Activated naive CD4-positive, alpha-beta T cell treated with anti-CD3 and anti-CD28 coated beads for 36 hours (primary cell): ENCODE measurements at regions of chrX and their contacts with region 1.

Region 1: DNA sequence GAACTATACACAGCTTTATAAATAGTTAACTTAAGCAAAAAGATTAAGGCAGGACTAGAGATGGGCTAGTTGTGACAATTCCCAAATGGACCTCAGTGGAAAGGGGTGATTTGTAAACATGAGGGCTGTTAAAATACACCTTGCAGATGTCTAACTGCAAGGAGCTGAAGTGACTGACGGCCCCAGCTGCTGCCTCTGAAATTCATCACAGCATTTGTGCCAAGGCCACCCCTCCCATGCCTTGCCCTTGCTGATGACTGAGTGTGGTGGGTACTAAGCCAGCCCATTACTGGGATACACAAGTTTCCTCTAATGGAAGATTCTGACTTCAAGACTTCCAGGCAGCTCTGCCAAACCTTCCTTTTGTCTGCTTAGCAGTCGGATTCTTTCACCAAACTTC is 23.7 kb upstream of the EGFL6 start:
- DNase-seq: no peak
- H3K4me3 Mint-ChIP-seq: no peak overlapping the region
- H3K27ac Mint-ChIP-seq: no peak overlapping the region
- H3K4me1 Mint-ChIP-seq: peaks cover 13% of the 10 kb centered on the region
- H3K27me3 Mint-ChIP-seq: peaks cover 2% of the 10 kb centered on the region

Region 2: DNA sequence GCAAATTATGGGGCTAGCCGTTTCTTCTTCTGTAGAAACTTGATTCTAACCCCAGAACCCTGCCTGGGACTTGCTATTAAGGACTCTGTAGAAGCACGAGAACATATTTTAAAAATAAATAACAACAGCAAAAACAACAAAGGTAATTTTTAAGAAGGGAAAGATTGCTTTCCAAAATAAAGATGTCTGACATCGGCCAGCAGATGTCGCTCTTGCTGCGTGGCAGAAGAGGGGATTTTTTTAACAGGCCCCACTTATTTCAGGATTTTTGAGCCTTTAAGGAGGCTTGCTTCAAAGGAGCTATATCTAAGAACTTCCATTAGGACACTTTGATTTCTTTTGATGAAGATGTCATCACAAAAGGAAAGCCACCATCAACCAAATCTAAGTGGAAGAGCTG is 39.2 kb before region 1 on chrX:
- CTCF ChIA-PET with region 1: no interaction called
- intact Hi-C with region 1: loop called (anchors 1 kb)
- DNase-seq: peak; percentile 61
- H3K4me3 Mint-ChIP-seq: no peak overlapping the region
- H3K27ac Mint-ChIP-seq: no peak overlapping the region
- H3K4me1 Mint-ChIP-seq: peaks cover 7% of the 10 kb centered on the region
- H3K27me3 Mint-ChIP-seq: no peaks in the 10 kb centered on the region

Region 3: GRCh38 chrX:13569479-13570260 is 23.9 kb after region 1 on chrX and contains the start of gene EGFL6:
- CTCF ChIA-PET with region 1: no interaction called
- intact Hi-C with region 1: loop called (anchors 2 kb)
- DNase-seq: no peak
- H3K4me3 Mint-ChIP-seq: peak within 1 kb of the TSS; percentile 6
- H3K27ac Mint-ChIP-seq: no peak within 1 kb of the TSS
- H3K4me1 Mint-ChIP-seq: peaks cover 12% of the 10 kb centered on the region
- H3K27me3 Mint-ChIP-seq: peaks cover 22% of the 10 kb centered on the region
- total RNA-seq, gene EGFL6: 0.12 TPM in 1 of 2 experiments, not detected in the other

Region 4: GRCh38 chrX:13653022-13653693 is 107.4 kb after region 1 on chrX and contains the start of gene TCEANC:
- CTCF ChIA-PET with region 1: no interaction called
- intact Hi-C with region 1: loop called (anchors 1 kb)
- DNase-seq: peak; percentile 95
- H3K4me3 Mint-ChIP-seq: peak within 1 kb of the TSS; percentile 88
- H3K27ac Mint-ChIP-seq: peak within 1 kb of the TSS; percentile 93
- H3K4me1 Mint-ChIP-seq: peaks cover 24% of the 10 kb centered on the region
- H3K27me3 Mint-ChIP-seq: no peaks in the 10 kb centered on the region
- total RNA-seq, gene TCEANC: 2.5 to 2.7 TPM

Region 5: GRCh38 chrX:13734278-13735172 is 188.8 kb after region 1 on chrX and contains the starts of genes OFD1 and TRAPPC2:
- CTCF ChIA-PET with region 1: no interaction called
- intact Hi-C with region 1: loop called (anchors 2 kb)
- DNase-seq: peak; percentile 92
- H3K4me3 Mint-ChIP-seq: peak within 1 kb of the TSS; percentile 95
- H3K27ac Mint-ChIP-seq: peak within 1 kb of the TSS; percentile 92
- H3K4me1 Mint-ChIP-seq: peaks cover 43% of the 10 kb centered on the region
- H3K27me3 Mint-ChIP-seq: no peaks in the 10 kb centered on the region
- total RNA-seq, gene OFD1: 25.3 to 26.2 TPM
- total RNA-seq, gene TRAPPC2: 9.6 to 10.7 TPM